ENCODE measurements at regions of chr12 and their contacts with region 1.

Region 1: DNA sequence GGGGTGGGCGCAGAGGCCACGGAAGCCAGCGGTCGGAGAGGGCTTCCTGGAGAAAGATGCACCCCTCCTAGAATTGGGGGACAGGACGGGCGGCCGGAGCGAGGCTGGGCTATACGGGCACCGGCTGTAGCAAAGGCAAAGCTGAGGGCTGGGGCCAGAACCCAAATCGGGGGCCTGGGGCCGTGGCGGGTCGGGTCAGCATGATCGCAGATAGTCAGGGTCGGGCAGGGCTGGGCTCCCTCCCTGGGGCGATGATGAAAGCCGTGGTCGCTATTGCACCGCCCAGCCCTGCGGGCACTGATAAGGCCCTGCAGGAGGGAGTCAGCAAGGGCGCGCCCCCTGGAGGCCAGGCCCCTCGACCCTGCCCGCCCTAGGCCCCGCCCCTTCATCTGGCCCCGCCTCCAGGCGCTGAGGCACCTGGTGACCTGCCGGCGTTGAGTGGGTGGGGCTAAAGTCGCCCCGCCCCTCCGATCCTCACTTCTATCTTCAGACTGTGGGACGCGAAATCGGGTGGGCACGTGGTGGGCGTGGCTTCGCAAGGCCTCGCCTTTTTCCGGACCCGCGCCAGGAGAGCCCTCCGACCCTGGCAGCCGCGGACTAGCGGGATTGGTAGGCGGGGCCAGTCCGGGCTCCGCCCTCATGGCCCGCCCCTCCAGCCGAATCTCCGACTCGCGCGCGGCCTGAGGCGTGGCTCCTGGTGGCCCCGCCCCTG is 418 bp upstream of the SH2B3 start:
- DNase-seq: peak; percentile 93 to 99
- H3K4me3 ChIP-seq: no peak overlapping the region
- CTCF ChIP-seq: no peak
- POLR2A ChIP-seq: no peak

Region 2: DNA sequence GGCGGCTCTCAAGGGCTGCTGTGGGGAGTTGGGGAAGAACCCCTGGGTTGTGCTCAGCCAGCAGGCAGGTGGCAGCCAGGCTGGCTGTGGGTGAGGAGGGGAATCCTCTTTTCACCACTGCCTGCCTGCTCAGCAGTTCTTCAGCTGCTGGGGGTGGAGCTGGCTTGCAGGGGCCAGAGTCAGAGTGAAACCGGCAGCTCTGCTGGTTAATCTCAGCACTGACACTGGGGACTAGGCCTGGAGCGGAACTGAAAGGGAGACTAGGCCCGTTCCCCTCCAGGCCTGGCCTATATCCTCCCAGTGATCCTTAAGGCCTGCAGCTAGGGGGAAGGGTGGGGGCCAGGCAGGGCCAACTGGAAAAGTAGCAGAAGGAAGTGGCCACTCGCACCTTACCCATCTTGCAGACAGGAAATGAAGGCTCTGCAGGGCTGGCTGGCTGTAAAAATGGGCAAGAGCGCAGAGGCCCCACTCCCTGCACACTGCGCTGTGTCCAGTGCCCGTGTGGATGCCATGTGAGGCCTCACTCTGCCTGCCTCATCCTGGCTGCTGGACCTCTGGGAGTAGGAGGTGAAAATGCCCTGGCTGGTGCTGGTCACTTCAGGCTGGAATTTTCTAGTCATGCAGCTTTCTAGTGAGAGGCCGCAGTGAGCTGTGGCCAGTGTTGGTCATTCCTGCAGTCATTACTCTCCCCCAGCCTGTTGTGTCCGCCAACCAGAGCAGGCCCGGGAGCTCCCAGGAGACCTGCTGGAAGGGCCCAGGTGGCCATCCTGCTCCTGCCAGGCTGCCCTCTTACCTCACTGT is 39.8 kb after region 1 on chr12:
- intact Hi-C with region 1: loop called (anchors 5 kb)
- DNase-seq: peak; percentile 58 to 92
- H3K4me3 ChIP-seq: no peak overlapping the region
- CTCF ChIP-seq: no peak
- POLR2A ChIP-seq: no peak